Mammary epithelial cell (primary cell): ENCODE measurements at regions of chr6 and their contacts with region 1.

Region 1: DNA sequence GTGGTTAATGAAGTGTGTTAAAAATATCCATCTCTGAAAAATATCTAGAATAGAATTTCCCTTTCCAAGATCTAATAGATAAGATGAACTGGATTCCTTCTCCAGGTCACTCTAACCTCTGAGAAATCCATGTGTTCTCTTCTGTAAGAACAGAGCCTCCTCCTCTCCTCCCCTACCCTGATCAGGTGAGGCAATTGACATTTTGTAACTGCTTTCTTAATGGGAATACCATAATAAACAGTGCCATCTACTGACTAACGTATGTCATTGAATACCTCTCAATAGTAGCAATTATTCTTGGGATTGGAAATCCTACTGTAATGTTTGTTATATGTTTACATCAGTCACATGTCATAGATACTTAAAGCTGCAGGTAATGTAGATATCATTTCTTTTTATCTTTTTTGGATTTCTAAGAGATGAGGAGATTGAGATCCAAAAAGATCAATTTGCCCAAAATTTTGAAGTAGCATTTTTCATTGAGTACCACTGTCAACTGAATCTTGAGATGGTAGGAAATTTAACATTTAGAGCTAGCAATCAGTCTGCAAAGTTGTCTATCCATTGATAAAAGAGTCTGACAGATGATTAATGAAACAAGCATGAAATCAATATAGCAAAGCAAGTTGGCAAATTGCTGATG is 365.8 kb upstream of the HSF2 start:
- DNase-seq: peak; percentile 47
- H3K4me3 ChIP-seq: no peak overlapping the region
- H3K27ac ChIP-seq: no peak overlapping the region
- H3K4me1 ChIP-seq: peaks cover 9% of the 10 kb centered on the region
- H3K27me3 ChIP-seq: no peaks in the 10 kb centered on the region
- CTCF ChIP-seq: peak; percentile 44 to 65

Region 2: GRCh38 chr6:121482004-121482693 is 551.5 kb before region 1 on chr6:
- CTCF ChIA-PET with region 1: no interaction called
- dilution Hi-C with region 1: no loop called
- in situ Hi-C with region 1: no loop called
- intact Hi-C with region 1: no loop called
- DNase-seq: peak; percentile 88
- H3K4me3 ChIP-seq: no peak overlapping the region
- H3K27ac ChIP-seq: peak overlapping the region; percentile 97
- H3K4me1 ChIP-seq: peaks cover 26% of the 10 kb centered on the region
- H3K27me3 ChIP-seq: no peaks in the 10 kb centered on the region
- CTCF ChIP-seq: no peak

Region 3: GRCh38 chr6:121743691-121744090 is 290.0 kb before region 1 on chr6:
- CTCF ChIA-PET with region 1: no interaction called
- dilution Hi-C with region 1: no loop called
- in situ Hi-C with region 1: no loop called
- intact Hi-C with region 1: no loop called
- DNase-seq: no peak
- H3K4me3 ChIP-seq: no peak overlapping the region
- H3K27ac ChIP-seq: no peak overlapping the region
- H3K4me1 ChIP-seq: peaks cover 7% of the 10 kb centered on the region
- H3K27me3 ChIP-seq: no peaks in the 10 kb centered on the region
- CTCF ChIP-seq: no peak

Region 4: DNA sequence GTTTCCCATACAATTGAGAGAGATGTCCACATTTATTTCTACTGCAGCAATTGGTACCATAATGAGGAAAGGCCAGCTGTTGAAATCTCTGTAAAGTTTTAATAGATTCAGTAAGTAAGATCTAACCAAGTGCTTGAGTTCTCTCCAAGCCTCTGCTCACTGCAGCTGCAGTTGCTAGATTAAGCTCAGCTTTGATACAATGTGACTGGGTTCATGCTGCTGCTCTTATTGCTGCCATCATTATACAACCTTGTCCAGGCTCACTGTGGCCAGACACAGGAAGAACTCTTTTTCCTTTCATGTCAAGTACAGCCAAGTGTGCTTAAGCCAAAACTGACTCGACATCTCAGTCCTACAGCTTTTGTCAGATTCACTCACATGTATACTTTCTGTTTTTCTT is 174.7 kb before region 1 on chr6:
- CTCF ChIA-PET with region 1: no interaction called
- dilution Hi-C with region 1: no loop called
- in situ Hi-C with region 1: loop called (anchors 25 kb)
- intact Hi-C with region 1: loop called (anchors 1 kb)
- DNase-seq: no peak
- H3K4me3 ChIP-seq: no peak overlapping the region
- H3K27ac ChIP-seq: no peak overlapping the region
- H3K4me1 ChIP-seq: no peaks in the 10 kb centered on the region
- H3K27me3 ChIP-seq: no peaks in the 10 kb centered on the region
- CTCF ChIP-seq: no peak

Region 5: GRCh38 chr6:121951918-121952379 is 81.7 kb before region 1 on chr6:
- CTCF ChIA-PET with region 1: no interaction called
- dilution Hi-C with region 1: no loop called
- in situ Hi-C with region 1: no loop called
- intact Hi-C with region 1: loop called (anchors 5 kb)
- DNase-seq: peak; percentile 79
- H3K4me3 ChIP-seq: no peak overlapping the region
- H3K27ac ChIP-seq: peak overlapping the region; percentile 41
- H3K4me1 ChIP-seq: peaks cover 10% of the 10 kb centered on the region
- H3K27me3 ChIP-seq: no peaks in the 10 kb centered on the region
- CTCF ChIP-seq: no peak

Region 6: GRCh38 chr6:121965739-121966138 is 67.9 kb before region 1 on chr6:
- CTCF ChIA-PET with region 1: no interaction called
- dilution Hi-C with region 1: no loop called
- in situ Hi-C with region 1: no loop called
- intact Hi-C with region 1: no loop called
- DNase-seq: no peak
- H3K4me3 ChIP-seq: no peak overlapping the region
- H3K27ac ChIP-seq: no peak overlapping the region
- H3K4me1 ChIP-seq: no peaks in the 10 kb centered on the region
- H3K27me3 ChIP-seq: no peaks in the 10 kb centered on the region
- CTCF ChIP-seq: no peak

Region 7: GRCh38 chr6:122184401-122184827 is 150.8 kb after region 1 on chr6:
- CTCF ChIA-PET with region 1: no interaction called
- dilution Hi-C with region 1: no loop called
- in situ Hi-C with region 1: no loop called
- intact Hi-C with region 1: loop called (anchors 5 kb)
- DNase-seq: peak; percentile 4
- H3K4me3 ChIP-seq: no peak overlapping the region
- H3K27ac ChIP-seq: no peak overlapping the region
- H3K4me1 ChIP-seq: no peaks in the 10 kb centered on the region
- H3K27me3 ChIP-seq: no peaks in the 10 kb centered on the region
- CTCF ChIP-seq: peak; percentile 9 to 49